K562 (cell line): ENCODE measurements at regions of chr13 and their contacts with region 1.

Region 1: GRCh38 chr13:46184277-46184699 is 2.3 kb upstream of the LCP1 start:
- DNase-seq: peak; percentile 49 to 72 (median 53)
- ATAC-seq: peak; percentile 66
- H3K4me3 ChIP-seq: no peak overlapping the region
- H3K27ac ChIP-seq: peak overlapping the region; percentile 98; the same call in 1 of the 3 replicates
- H3K4me1 ChIP-seq: peaks cover 7 to 24% of the 10 kb centered on the region in 2 experiments; a peak in 4 of 5 replicates
- H3K27me3 ChIP-seq: no peaks in the 10 kb centered on the region
- CTCF ChIP-seq: peak; percentile 69 to 76 (median 73)
- EP300 ChIP-seq: no peak
- POLR2A ChIP-seq: no peak
- RAD21 ChIP-seq: peak in 1 of 2 experiments; percentile 52; a peak in 3 of 4 replicates

Region 2: GRCh38 chr13:45932676-45933075 is 251.6 kb before region 1 on chr13:
- CTCF ChIA-PET with region 1: no interaction called
- POLR2A ChIA-PET with region 1: no interaction called
- in situ Hi-C with region 1: no loop called
- intact Hi-C with region 1: no loop called
- DNase-seq: no peak
- ATAC-seq: no peak
- H3K4me3 ChIP-seq: no peak overlapping the region
- H3K27ac ChIP-seq: no peak overlapping the region
- H3K4me1 ChIP-seq: no peaks in the 10 kb centered on the region
- H3K27me3 ChIP-seq: peaks cover 18 to 44% of the 10 kb centered on the region in 2 experiments; a peak in 4 of 5 replicates
- CTCF ChIP-seq: no peak
- EP300 ChIP-seq: no peak
- POLR2A ChIP-seq: no peak
- RAD21 ChIP-seq: no peak

Region 3: DNA sequence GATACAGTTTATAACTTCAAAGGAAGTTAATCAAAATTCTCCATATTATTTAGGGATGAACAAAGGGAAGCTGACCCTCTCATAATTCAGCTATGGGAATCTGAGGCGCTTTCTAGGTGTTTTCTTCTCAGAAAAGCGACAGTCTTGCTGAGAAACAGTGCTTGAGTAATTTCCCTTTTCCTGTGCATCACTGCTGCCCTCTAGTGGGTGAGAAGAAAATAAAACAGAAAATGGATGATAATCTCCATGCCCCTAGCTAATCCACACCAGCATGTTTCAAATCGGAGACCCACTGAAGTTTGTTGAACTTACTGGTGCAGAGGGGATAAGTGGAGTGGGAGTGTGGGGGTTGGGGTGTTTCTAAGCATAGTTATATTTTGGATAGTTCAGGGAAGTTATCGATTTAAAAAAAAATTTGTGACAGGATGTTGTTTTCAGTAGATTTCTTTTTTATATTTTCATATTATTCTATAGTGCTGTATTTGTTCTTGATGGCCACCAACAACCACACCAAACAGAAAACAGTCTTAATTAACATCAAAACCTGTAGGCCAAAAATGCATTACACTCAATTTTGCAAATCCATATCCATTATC is 23.7 kb before region 1 on chr13:
- CTCF ChIA-PET with region 1: no interaction called
- POLR2A ChIA-PET with region 1: no interaction called
- in situ Hi-C with region 1: no loop called
- intact Hi-C with region 1: loop called (anchors 2 kb)
- DNase-seq: peak; percentile 24 to 74 (median 44)
- ATAC-seq: peak; percentile 81
- H3K4me3 ChIP-seq: no peak overlapping the region
- H3K27ac ChIP-seq: no peak overlapping the region
- H3K4me1 ChIP-seq: peaks cover 0 to 5% of the 10 kb centered on the region in 2 experiments; a peak in 2 of 5 replicates
- H3K27me3 ChIP-seq: no peaks in the 10 kb centered on the region
- CTCF ChIP-seq: peak; percentile 57 to 68 (median 67)
- EP300 ChIP-seq: no peak
- POLR2A ChIP-seq: no peak
- RAD21 ChIP-seq: peak; percentile 43 to 56

Region 4: DNA sequence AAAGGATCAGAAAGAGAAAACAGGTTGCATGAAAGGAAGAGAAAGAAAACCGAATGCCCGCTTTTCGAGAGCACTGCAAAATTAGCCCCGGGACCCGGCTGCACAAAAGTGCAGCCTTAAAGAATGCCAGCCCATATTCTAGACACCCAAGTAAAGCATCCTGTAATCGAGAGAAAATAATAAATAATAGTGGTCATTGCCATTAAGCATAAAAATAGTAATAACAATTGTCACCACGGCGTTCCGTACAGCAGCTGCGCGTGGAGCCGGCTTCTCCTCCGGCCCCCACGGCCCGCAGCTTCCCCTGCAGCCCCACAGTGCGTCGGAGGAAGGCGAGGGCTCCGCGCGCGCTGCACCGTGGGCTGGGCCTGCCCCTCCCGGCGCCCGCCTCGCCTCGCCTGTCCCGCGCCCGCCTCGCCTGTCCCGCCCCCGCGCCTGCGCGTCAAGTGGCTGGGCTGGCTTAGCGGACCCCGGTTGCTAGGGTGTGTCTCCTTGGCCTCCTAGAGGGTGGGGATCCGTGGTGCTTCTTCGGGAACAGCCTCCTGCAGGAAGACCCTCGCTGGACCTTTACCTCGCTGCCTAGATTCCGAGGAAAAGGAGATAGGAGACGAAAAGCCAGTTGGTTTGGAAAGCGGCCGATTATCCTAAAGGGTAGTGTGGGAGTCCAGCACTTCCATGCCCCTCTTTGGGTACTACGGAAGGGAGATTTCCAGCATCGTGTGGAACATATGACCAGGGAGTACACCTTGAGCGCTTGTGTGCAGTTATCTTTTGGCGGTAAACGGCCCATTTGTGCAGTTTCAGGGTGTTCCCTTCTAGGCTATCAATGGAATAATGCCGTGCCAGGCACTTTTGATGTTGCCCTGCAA is 27.4 kb after region 1 on chr13 and contains the start of gene LRRC63:
- CTCF ChIA-PET with region 1: no interaction called
- POLR2A ChIA-PET with region 1: interaction called, 3 read pairs
- in situ Hi-C with region 1: no loop called
- intact Hi-C with region 1: loop called (anchors 2 kb)
- DNase-seq: peak; percentile 67 to 88 (median 77)
- ATAC-seq: peak; percentile 99
- H3K4me3 ChIP-seq: peak within 1 kb of the TSS; percentile 45
- H3K27ac ChIP-seq: peak within 1 kb of the TSS; percentile 68
- H3K4me1 ChIP-seq: peaks cover 5 to 6% of the 10 kb centered on the region in 2 experiments; a peak in 3 of 5 replicates
- H3K27me3 ChIP-seq: no peaks in the 10 kb centered on the region
- CTCF ChIP-seq: no peak
- EP300 ChIP-seq: no peak
- POLR2A ChIP-seq: no peak
- RAD21 ChIP-seq: no peak
- polyA plus RNA-seq, gene LRRC63: 0.21 to 0.25 TPM

Region 5: DNA sequence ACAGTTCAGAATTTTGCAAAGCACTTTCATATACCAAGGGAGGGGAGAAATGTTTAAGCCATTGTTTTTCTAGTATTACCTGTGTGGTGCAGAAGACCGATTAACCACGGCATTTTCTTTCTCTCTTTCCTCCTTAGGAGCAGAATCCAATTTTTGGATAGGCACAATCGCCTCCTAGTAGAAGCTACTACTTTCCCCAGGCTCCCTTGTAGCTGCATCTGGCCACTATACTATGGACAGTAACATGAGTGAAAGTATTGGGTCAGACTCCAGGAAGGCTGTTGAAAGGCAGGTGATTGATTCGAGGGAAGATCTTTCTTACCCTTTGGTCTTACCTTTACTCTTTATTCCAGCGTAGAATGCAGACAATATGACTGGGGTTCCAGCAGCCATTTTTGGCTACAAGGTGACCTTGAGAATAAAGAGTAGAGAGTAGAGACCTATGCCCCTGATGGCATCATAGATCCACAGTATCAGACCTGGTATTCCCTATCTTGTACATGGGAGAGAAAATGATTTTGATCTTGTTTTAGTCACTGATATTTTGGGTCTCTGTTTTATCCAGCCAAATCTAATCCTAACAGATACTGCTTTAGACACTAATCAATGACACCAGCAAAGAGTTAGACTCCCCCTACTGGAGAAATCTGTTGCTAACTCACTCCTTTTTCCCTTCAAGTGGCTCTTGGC is 104.4 kb after region 1 on chr13:
- CTCF ChIA-PET with region 1: no interaction called
- POLR2A ChIA-PET with region 1: no interaction called
- in situ Hi-C with region 1: no loop called
- intact Hi-C with region 1: loop called (anchors 5 kb)
- DNase-seq: peak; percentile 26 to 63 (median 38)
- ATAC-seq: peak; percentile 72
- H3K4me3 ChIP-seq: no peak overlapping the region
- H3K27ac ChIP-seq: no peak overlapping the region
- H3K4me1 ChIP-seq: peaks cover 2 to 15% of the 10 kb centered on the region in 2 experiments; a peak in 3 of 5 replicates
- H3K27me3 ChIP-seq: no peaks in the 10 kb centered on the region
- CTCF ChIP-seq: peak; percentile 52 to 67 (median 65); a peak in 5 of 6 replicates
- EP300 ChIP-seq: no peak
- POLR2A ChIP-seq: no peak
- RAD21 ChIP-seq: peak; percentile 41 to 76; a peak in 2 of 4 replicates

Region 6: GRCh38 chr13:47066226-47066625 is 881.9 kb after region 1 on chr13:
- CTCF ChIA-PET with region 1: no interaction called
- POLR2A ChIA-PET with region 1: no interaction called
- in situ Hi-C with region 1: no loop called
- intact Hi-C with region 1: no loop called
- DNase-seq: no peak
- ATAC-seq: no peak
- H3K4me3 ChIP-seq: no peak overlapping the region
- H3K27ac ChIP-seq: no peak overlapping the region
- H3K4me1 ChIP-seq: no peaks in the 10 kb centered on the region
- H3K27me3 ChIP-seq: no peaks in the 10 kb centered on the region
- CTCF ChIP-seq: no peak
- EP300 ChIP-seq: no peak
- POLR2A ChIP-seq: no peak
- RAD21 ChIP-seq: no peak